ENCODE measurements at regions of chr1 and their contacts with region 1.

Region 1: GRCh38 chr1:150464422-150464826 is 22.8 kb upstream of the TARS2 start:
- DNase-seq: peak; percentile 69 to 76 (median 73)
- ATAC-seq: peak; percentile 71
- H3K4me3 ChIP-seq: no peak overlapping the region
- H3K27ac ChIP-seq: no peak overlapping the region
- H3K4me1 ChIP-seq: no peaks in the 10 kb centered on the region
- H3K27me3 ChIP-seq: no peaks in the 10 kb centered on the region
- CTCF ChIP-seq: peak; percentile 61 to 81 (median 80)
- POLR2A ChIP-seq: no peak

Region 2: GRCh38 chr1:150552093-150552691 is 87.8 kb after region 1 on chr1:
- intact Hi-C with region 1: loop called (anchors 10 kb)
- DNase-seq: peak in 3 of 4 donors; percentile 60 to 86 (median 71)
- ATAC-seq: peak; percentile 28
- H3K4me3 ChIP-seq: no peak overlapping the region
- H3K27ac ChIP-seq: peak overlapping the region in 3 of 4 donors; percentile 9 to 58 (median 51)
- H3K4me1 ChIP-seq: peaks cover 29% of the 10 kb centered on the region
- H3K27me3 ChIP-seq: no peaks in the 10 kb centered on the region
- CTCF ChIP-seq: no peak
- POLR2A ChIP-seq: peak in 1 of 3 donors; percentile 28

Region 3: DNA sequence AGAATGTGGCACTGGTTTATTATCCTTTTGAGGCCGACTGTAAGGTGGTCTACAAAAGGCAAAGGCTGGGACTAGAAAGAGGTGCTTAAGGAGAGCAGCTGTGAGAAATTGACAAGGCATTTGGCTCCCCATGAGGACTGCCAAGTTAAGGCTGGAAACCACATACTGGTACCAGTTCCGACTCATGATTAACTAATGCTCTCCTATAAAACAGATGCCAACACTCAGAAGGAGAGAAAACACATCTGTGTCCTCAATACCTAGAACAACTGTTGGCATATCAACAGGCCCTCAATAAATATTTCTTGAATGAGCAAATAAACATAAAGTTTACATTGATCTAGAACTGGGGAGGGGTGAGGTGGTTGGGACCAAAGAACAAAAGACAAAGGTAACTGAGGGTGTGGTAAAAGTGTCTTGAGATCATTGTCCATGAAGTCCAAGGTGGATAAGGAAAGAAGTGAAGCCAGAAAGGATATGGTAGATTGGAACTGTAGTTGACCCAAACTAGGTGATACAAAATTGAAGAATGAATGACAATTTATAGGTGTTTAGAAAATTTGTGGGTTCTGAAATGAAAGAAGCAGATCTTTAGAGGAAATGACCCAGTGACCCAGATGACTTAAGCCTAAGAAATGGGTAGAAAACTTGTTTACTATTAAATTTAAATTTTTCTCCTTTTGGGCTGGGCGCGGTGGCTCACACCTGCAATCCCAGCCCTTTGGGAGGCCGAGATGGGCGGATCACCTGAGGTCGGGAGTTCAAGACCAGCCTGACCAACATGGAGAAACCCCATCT is 131.9 kb after region 1 on chr1:
- intact Hi-C with region 1: no loop called
- DNase-seq: no peak
- ATAC-seq: no peak
- H3K4me3 ChIP-seq: no peak overlapping the region
- H3K27ac ChIP-seq: peak overlapping the region in 1 of 4 donors; percentile 30
- H3K4me1 ChIP-seq: peaks cover 12% of the 10 kb centered on the region
- H3K27me3 ChIP-seq: no peaks in the 10 kb centered on the region
- CTCF ChIP-seq: no peak
- POLR2A ChIP-seq: no peak

Region 4: DNA sequence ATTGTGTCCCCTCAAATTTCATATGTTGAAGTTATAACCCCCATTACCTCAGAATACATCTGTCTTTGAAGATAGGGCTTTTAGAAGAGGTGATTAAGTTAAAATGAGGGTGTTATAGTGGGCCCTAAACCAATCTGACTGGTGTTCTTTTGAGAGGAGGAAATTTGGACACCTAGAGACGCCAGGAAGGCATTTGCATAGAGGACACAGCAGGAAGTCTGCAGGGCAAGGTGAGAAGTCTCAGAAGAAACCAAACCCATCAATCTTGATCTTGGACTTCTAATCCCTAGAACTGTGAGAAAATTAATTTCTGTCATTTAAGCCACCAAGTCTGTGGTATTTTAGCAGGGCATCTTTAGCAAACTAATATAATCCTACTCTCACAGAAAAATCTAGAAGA is 219.5 kb after region 1 on chr1:
- intact Hi-C with region 1: loop called (anchors 10 kb)
- DNase-seq: no peak
- ATAC-seq: no peak
- H3K4me3 ChIP-seq: no peak overlapping the region
- H3K27ac ChIP-seq: no peak overlapping the region
- H3K4me1 ChIP-seq: no peaks in the 10 kb centered on the region
- H3K27me3 ChIP-seq: no peaks in the 10 kb centered on the region
- CTCF ChIP-seq: no peak
- POLR2A ChIP-seq: no peak

Measured in body of pancreas (tissue), 4 donors.